Activated CD4-positive, alpha-beta memory T cell treated with anti-CD3 and anti-CD28 coated beads for 36 hours (primary cell): ENCODE measurements at regions of chr10 and their contacts with region 1.

Region 1: DNA sequence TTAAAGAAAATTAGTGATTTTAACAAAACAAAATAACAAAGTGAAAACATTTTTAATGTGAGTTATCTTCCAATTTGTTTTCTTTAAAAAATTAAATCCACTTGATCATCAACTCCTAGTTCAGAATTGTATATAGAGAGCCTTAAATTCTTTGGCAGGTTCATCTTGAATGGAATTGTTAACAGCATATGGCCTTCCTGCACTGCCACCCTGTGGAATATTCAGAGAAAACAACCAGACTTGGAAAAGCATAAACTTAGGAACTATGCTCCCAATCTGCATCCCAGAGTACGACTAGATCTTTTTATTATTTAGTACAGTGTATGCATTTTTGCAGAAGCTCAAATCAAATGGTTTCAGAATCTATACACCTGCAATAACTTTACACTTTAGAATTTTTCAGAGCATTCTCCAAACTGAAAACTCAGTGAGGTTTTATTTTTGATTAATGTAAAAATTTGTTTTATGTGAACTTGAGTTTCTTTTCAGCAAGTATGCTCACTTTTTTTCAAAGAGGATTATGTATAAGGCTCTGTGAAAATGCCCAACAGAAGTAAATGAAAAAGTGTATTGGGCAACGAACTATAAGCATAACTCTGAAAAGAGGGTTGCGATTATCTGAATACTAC is 44.9 kb upstream of the ANK3 start:
- DNase-seq: peak; percentile 15
- H3K4me3 Mint-ChIP-seq: no peak overlapping the region
- H3K27ac Mint-ChIP-seq: no peak overlapping the region
- H3K4me1 Mint-ChIP-seq: no peaks in the 10 kb centered on the region
- H3K27me3 Mint-ChIP-seq: no peaks in the 10 kb centered on the region

Region 2: GRCh38 chr10:60099998-60100747 is 334.4 kb before region 1 on chr10:
- CTCF ChIA-PET with region 1: interaction called, 3 read pairs
- POLR2A ChIA-PET with region 1: no interaction called
- intact Hi-C with region 1: loop called (anchors 1 kb)
- DNase-seq: no peak
- H3K4me3 Mint-ChIP-seq: no peak overlapping the region
- H3K27ac Mint-ChIP-seq: no peak overlapping the region
- H3K4me1 Mint-ChIP-seq: no peaks in the 10 kb centered on the region
- H3K27me3 Mint-ChIP-seq: no peaks in the 10 kb centered on the region

Region 3: GRCh38 chr10:60114765-60115586 is 319.6 kb before region 1 on chr10:
- CTCF ChIA-PET with region 1: interaction called, 5 read pairs
- POLR2A ChIA-PET with region 1: no interaction called
- intact Hi-C with region 1: loop called (anchors 5 kb)
- DNase-seq: no peak
- H3K4me3 Mint-ChIP-seq: no peak overlapping the region
- H3K27ac Mint-ChIP-seq: no peak overlapping the region
- H3K4me1 Mint-ChIP-seq: no peaks in the 10 kb centered on the region
- H3K27me3 Mint-ChIP-seq: no peaks in the 10 kb centered on the region

Region 4: DNA sequence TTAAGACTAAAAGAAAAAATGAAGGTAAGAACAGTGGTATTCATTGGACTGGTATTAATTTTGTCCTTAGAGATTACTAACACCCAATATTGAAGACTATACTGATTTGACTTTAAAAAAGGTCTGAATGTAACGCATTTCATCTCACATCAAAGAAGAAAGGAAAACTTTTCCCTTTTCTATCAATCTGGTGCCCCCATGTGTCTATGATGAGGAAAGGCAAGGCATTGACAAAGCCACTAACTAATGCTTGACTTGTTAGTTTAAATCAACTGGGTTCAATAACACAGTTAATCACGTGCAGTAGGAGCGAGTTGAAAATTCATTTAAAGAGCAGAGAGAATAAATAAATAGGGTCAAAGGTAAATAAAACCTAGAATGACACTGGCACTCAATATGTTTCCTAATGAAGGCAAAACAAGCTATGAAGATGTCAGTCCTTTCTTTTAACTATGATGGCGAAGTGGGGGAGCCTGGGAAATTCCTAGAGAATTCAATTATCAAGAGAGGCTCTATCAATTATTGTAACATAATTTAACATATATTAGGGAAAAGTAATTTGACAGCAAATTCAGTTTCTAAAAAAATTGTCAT is 225.8 kb before region 1 on chr10:
- CTCF ChIA-PET with region 1: interaction called, 5 read pairs
- POLR2A ChIA-PET with region 1: no interaction called
- intact Hi-C with region 1: loop called (anchors 1 kb)
- DNase-seq: no peak
- H3K4me3 Mint-ChIP-seq: no peak overlapping the region
- H3K27ac Mint-ChIP-seq: no peak overlapping the region
- H3K4me1 Mint-ChIP-seq: peaks cover 20% of the 10 kb centered on the region
- H3K27me3 Mint-ChIP-seq: no peaks in the 10 kb centered on the region

Region 5: DNA sequence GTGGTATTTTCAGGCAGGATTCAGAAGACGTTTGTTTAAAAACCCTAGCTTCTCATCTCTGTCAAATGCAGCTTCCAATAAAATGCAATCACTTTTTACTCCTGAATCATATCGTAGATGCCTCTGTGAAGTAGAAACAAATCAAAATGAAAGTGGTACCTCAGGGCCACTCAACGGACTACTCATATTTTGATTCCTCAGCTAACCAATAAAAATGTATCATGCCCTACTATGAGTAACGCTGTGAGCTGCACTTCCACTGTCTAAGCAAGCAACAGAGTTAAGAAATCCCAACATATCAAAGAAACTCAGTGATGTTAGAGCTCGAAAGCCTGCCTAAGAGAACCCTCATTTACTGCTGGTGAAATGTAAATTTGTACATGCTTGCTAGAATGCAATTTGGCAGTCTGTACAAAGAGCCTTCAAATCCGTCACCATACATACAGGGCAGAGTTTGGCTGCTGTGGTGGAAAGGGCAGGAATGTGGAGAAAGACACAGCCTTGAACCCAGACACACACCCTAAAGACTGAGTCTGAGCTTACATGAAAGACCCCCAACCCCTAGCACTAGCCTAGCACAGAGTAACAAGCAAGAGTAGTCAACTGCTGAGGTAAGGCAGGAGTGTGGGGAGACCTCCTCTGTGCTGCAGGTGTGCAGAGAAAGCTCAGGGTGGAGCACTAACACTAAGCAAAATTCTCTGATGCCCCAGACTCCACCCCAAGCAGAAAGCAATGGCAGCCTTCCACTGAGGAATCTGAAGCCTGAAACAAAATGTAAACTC is 196.4 kb before region 1 on chr10:
- CTCF ChIA-PET with region 1: interaction called, 3 read pairs
- POLR2A ChIA-PET with region 1: no interaction called
- intact Hi-C with region 1: loop called (anchors 2 kb)
- DNase-seq: peak; percentile 26
- H3K4me3 Mint-ChIP-seq: no peak overlapping the region
- H3K27ac Mint-ChIP-seq: peak overlapping the region; percentile 50
- H3K4me1 Mint-ChIP-seq: peaks cover 31% of the 10 kb centered on the region
- H3K27me3 Mint-ChIP-seq: no peaks in the 10 kb centered on the region